ENCODE measurements at regions of chr5 and their contacts with region 1.

Region 1: DNA sequence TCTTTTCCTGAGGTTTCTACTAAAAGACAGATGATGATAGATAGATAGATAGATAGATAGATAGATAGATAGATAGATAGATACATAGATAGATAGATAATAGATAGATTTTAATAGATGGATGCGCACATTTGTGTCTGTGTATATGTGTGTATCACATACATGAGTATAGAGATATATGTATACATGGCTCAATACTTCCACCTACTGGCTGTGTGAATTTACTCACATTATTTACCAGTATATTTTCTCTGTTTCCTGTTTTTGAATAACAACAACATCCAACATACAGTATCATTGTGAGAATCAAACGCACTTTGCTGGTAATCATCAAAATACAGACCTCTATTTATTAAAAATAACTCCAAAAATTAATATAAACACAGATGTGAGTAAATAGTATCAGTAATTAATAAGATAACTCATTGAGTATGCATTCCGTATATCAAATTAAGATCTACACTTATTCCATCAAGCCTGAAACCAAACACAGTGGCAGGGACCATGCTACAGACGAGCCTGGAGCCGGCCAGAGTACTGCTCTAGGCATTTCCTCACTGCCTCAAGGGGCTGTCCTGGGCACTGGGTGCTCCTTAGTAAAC is 338.0 kb downstream of the SEMA5A start:
- DNase-seq: peak; percentile 53

Region 2: DNA sequence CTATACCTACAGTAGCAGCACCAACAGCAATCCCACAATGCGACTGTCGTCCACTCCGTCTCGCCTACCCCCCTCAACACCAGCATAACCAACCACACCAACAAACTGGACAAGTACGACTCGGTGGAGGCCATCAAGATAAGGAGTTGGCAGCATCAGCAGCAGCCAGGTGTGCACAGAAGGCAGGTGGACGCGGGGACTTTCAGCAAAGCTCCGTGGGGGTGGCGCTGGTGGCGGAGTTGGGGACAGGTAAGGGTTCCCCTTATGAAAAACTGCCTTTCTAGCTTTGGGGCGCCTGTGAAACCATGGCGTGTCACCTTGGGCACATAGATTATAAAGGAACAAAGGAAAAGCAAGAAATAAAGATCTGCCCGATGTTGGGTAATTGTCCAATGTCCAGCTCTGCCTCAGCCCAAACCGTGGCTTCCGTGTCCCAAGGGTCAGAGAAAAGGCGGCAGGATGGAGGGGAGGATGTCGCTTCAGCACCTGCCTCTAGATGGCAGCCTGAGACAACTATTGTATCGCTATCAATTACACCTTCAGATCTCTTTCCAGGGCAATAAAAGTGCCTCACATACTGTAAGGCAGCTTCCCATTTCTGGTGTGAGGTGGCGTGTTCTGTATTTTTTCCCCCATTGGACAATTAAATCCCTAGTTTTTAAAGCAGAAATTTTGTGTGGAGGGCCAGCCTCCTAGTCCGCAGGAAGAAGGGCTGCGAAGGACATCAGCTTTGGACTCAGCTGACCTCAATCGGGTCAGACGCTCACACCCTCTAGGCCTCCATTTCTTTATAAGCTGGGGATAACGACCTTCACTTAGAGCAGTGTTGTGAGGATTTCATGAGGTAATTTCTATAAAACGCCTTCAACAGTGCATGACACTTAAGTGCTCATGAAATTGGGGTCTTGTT is 1280.2 kb before region 1 on chr5:
- in situ Hi-C with region 1: loop called (anchors 25 kb)
- DNase-seq: peak; percentile 81

Region 3: DNA sequence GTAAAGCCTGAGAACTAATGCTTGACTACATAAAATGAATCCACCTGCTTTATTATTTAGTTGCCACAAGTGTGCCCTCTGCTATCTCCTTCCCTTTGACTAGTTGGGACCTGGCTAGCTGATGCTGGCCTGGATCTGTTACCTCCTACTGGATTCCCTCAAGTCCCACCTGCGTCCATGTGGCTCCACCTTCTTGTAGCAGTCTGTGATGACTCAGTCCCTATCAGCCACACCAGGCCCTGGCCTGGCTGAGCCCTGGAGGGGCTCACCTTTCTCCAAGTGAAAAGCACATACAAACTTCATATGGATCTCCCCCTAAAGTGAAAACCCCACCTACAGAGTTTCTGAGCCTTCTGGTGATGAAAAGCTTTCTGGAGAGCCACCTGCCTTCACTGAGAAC is 273.5 kb before region 1 on chr5:
- in situ Hi-C with region 1: no loop called
- DNase-seq: no peak

Region 4: DNA sequence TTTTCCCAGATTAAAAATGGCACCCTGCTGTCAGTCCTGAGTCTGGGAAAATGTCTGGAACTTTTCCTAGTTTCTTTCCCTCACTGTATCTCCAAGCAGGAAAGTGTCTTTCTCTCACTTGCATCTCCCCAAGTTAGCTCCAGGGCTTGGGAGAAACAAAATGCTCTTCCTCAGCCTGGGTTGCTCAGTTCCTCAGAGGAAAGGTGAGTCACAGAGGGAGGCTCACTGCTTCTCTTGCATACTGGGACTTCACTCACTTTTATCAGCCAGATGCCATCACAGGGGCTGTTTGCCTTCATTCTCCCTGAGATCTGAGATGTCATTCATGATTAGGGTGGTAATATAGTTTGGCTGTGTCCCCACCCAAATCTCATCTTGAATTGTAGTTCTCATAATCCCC is 182.0 kb before region 1 on chr5:
- in situ Hi-C with region 1: no loop called
- DNase-seq: no peak